Mammary epithelial cell (primary cell): ENCODE measurements at regions of chr5 and their contacts with region 1.

Region 1: DNA sequence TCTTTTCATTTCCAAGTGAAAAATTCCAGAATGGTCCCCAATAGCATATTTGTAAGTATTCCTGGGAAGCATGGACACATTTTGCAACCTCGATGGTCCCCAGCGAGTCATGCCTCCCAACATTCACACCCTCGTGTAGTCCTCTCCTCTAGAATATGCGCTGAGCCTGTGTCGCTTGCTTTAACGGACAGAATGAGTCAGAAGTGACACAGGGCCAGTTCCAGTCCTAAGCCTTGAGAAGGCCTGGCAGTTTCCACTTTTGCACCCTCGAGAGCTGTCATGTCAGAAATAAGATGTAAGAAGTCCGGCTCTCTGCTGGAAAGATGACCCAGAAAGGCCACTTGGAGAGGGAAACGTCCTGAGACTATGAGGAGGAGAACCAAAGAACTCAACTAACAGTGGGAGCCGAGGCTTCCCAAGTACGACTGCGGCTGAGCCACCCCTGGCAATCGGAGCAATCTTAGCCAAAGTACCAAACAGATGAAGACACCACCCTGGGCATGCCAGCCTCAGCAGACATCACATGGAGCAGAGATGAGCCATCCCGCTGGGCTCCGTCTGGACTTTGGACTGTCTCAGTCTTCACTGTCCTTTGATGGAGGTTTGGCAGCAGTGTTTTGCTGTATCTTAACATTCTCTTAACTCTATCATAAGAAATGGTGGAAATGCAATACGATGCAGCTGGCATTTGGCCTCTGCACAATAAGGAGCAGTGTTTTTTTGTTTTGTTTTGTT is 42.6 kb upstream of the GFPT2 start:
- DNase-seq: no peak
- H3K4me3 ChIP-seq: no peak overlapping the region
- H3K27ac ChIP-seq: no peak overlapping the region
- H3K4me1 ChIP-seq: no peaks in the 10 kb centered on the region
- H3K27me3 ChIP-seq: no peaks in the 10 kb centered on the region
- CTCF ChIP-seq: no peak

Region 2: GRCh38 chr5:180366326-180366725 is 29.4 kb before region 1 on chr5:
- CTCF ChIA-PET with region 1: no interaction called
- dilution Hi-C with region 1: no loop called
- in situ Hi-C with region 1: no loop called
- intact Hi-C with region 1: no loop called
- DNase-seq: no peak
- H3K4me3 ChIP-seq: no peak overlapping the region
- H3K27ac ChIP-seq: no peak overlapping the region
- H3K4me1 ChIP-seq: no peaks in the 10 kb centered on the region
- H3K27me3 ChIP-seq: no peaks in the 10 kb centered on the region
- CTCF ChIP-seq: no peak

Region 3: GRCh38 chr5:180414176-180414575 is 18.5 kb after region 1 on chr5:
- CTCF ChIA-PET with region 1: no interaction called
- dilution Hi-C with region 1: no loop called
- in situ Hi-C with region 1: no loop called
- intact Hi-C with region 1: no loop called
- DNase-seq: no peak
- H3K4me3 ChIP-seq: no peak overlapping the region
- H3K27ac ChIP-seq: no peak overlapping the region
- H3K4me1 ChIP-seq: no peaks in the 10 kb centered on the region
- H3K27me3 ChIP-seq: no peaks in the 10 kb centered on the region
- CTCF ChIP-seq: no peak

Region 4: DNA sequence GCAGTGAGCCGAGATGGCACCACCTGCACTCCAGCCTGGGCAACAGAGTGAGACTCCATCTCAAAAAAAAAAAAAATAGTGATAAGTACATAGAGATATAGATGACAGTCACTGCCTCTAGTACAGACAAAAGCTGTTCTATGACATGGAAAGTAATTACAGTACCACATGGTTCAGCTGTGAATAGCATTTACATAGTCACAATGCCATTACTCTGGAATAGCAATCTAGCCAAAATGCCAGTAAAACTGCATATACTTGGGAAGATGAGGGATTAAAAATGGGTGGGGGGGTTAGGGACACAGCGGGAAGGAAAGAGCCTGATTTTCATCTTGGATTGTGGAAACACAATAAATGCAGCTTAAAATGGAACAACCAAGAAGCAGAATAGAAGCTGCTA is 59.0 kb after region 1 on chr5:
- CTCF ChIA-PET with region 1: no interaction called
- dilution Hi-C with region 1: loop called (anchors 5 kb)
- in situ Hi-C with region 1: no loop called
- intact Hi-C with region 1: no loop called
- DNase-seq: no peak
- H3K4me3 ChIP-seq: no peak overlapping the region
- H3K27ac ChIP-seq: no peak overlapping the region
- H3K4me1 ChIP-seq: no peaks in the 10 kb centered on the region
- H3K27me3 ChIP-seq: no peaks in the 10 kb centered on the region
- CTCF ChIP-seq: no peak